ENCODE measurements at regions of chr17 and their contacts with region 1.

Region 1: DNA sequence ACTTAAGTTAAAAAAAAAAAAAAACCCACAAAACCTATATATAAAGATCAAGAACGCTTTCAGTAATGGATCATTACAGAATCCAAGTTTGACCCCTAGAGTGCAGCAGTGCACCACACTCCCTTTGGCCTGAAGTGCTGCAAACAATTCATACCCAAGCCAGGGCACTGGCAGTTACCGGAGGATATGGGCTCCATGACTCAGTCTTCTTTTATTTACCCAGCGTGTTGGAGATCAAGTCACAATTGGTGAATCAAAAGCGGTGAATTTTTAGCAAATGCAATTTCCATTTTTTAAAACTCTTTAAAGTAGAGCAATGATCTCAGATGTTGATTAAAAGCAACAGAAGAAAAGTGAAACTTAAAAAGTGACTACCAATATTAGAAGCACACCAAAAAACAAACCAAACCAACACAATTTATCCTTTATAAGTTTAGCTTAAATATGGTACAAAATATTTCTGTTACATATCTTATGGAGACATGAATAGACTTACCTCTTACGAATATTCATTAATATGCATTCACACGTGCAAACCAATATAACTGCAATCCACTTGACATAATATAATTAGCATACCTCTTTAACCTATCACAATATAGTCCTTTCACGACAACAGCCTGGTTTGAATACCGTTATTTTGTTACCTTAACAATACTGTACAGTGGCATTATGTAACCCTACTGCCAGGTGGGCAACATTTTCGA is 46.3 kb downstream of the ZNF652 start:
- DNase-seq: peak; percentile 79 to 92 (median 87)
- H3K4me3 ChIP-seq: no peak overlapping the region
- H3K27ac ChIP-seq: peak overlapping the region in 2 of 5 donors; percentile 2 to 4
- H3K4me1 ChIP-seq: peaks cover 5 to 8% of the 10 kb centered on the region in 2 donors
- H3K27me3 ChIP-seq: no peaks in the 10 kb centered on the region
- CTCF ChIP-seq: peak; percentile 65 to 99 (median 89)
- POLR2A ChIP-seq: no peak

Region 2: DNA sequence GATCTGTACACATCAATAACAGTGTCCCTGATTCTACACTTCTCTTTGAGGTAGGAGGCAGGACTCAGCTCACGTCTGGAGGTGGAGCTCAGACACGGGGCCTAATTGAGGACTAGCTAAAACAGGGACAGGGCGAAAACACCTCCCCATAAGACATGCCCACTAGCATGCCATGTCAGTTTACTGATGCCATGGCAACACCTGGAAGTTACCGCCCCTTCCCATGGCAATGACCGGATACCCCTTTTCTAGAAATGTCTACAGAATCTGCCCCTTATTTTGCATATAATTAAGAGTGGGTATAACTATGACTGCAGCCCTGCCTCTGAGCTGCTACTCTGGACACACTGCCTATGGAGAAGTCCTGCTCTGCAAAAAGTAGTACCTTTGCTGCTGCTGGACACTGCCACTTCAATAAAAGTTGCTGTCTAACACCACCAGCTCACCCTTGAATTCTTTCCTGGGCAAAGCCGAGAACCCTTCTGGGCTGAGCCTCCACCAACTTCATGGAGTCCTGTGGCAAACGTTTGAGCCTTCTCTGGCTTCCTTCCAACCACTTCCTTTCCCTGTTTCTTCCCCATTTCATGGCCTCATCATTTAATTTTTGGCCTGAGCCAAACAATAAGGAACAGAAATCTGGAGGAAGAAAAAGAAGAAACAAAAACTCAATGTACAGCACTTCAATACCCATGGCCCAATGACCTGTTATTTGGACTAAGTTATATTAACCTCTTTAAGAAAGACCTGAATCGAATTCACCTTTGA is 78.0 kb after region 1 on chr17:
- intact Hi-C with region 1: loop called (anchors 2 to 5 kb)
- DNase-seq: peak in 1 of 7 donors; percentile 25
- H3K4me3 ChIP-seq: no peak overlapping the region
- H3K27ac ChIP-seq: no peak overlapping the region
- H3K4me1 ChIP-seq: peaks cover 0 to 30% of the 10 kb centered on the region in 2 donors
- H3K27me3 ChIP-seq: no peaks in the 10 kb centered on the region
- CTCF ChIP-seq: no peak
- POLR2A ChIP-seq: no peak

Region 3: GRCh38 chr17:49399995-49400394 is 84.3 kb after region 1 on chr17:
- intact Hi-C with region 1: loop called (anchors 2 to 5 kb)
- DNase-seq: no peak
- H3K4me3 ChIP-seq: no peak overlapping the region
- H3K27ac ChIP-seq: no peak overlapping the region
- H3K4me1 ChIP-seq: peaks cover 0 to 1% of the 10 kb centered on the region in 2 donors
- H3K27me3 ChIP-seq: no peaks in the 10 kb centered on the region
- CTCF ChIP-seq: no peak
- POLR2A ChIP-seq: no peak

Region 4: DNA sequence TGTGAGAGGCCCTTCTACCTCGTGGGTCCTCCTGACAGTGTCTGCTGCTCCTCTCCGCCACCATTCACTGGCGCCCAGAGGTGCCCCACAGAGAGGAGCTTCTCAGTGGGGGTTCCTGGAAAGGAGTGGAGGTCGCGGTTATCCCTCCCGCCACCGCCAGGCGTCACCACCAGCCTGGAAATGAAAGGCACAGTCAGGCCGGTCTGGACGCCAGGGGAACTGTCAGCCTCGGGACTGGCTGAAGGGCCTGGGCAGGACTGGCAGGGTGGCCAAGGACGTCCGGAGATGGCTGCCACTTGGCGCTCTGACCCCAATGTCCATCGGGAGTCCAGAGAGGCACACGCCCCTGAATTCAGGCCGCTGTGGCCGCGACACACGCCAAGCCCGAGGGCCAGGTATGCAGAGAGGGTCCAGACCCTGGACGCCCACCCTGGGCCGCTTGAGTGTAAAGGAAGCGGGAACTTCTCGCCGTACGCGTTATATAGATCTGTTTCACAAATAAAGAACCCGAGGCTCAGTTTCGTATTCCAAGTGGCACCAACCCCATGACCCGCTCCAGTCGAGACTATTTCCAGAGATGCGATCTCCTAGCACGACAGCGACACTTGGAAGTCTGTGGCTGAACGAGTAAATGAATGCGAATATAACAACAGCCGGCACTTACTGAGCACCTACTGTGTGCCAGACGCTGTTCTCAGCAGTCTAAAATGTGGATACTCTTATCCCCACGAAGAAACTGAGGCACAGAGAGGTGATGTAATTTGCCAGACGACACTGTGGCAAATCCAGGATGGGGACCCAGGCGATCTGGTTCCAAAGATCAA is 252.4 kb after region 1 on chr17:
- intact Hi-C with region 1: no loop called
- DNase-seq: peak; percentile 90 to 97 (median 95)
- H3K4me3 ChIP-seq: peak overlapping the region in 2 of 4 donors; percentile 23 to 46
- H3K27ac ChIP-seq: peak overlapping the region; percentile 38 to 83 (median 63)
- H3K4me1 ChIP-seq: peaks cover 4 to 21% of the 10 kb centered on the region in 2 donors
- H3K27me3 ChIP-seq: peaks cover 6% of the 10 kb centered on the region
- CTCF ChIP-seq: peak; percentile 89 to 100 (median 99)
- POLR2A ChIP-seq: peak in 1 of 2 donors; percentile 27